Common myeloid progenitor, CD34-positive (primary cell): ENCODE measurements at regions of chr11 and their contacts with region 1.

Region 1: DNA sequence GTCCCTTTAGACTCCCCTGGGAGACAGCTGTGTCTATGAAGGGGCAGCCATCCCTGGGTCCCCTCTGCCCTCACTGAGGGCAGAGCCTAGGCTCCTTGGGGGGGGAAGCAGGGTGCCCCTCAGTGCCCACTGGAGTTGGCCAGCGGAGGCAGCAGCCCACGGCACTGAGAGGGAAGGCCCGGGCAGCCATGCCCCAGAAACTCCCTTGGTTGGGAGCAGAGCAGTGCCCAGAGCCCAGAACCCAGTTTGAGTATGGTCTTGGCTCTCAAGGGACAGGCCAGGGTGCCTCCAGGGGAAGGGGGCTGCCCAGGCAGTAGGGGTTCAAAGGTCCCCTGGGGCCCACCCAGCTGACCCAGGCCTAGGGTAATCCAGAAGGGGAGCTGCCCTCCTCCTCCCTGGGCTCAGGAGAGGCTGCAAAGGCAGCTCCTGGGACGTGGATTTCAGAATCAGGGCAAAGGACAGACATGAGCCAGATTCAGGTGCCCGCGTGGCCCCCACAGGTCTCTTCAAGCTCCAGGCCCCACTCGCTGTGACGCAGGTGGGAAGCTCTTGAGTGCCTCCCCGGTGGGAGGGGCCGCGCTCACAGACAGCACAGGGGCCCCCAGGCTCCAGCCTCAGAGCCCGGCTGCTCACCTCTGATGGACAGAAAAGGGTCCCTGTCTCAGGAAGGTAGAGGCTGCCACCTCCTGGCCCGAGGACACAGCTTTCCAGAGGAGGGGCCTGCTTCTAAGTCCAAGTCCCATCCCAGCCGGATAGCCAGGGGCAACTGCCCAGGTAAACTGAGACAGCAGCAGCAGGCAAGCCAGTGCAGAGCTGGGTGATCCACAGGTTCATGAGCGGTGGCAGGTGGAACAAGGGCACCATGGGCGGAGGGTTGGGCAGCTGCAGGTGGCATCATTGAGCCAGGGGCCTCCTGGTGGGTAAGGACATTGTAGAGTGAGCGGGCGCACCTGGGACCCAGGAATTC is 2.6 kb downstream of the C11orf21 start:
- DNase-seq: peak; percentile 31 to 46 (median 38)
- H3K4me3 ChIP-seq: peak overlapping the region in 5 of 7 experiments; percentile 1 to 52 (median 29)
- H3K27ac ChIP-seq: peak overlapping the region in 1 of 2 experiments; percentile 25
- H3K4me1 ChIP-seq: peaks cover 3 to 68% (median 58%) of the 10 kb centered on the region in 4 experiments
- H3K27me3 ChIP-seq: no peaks in the 10 kb centered on the region

Region 2: GRCh38 chr11:2186669-2187279 is 112.3 kb before region 1 on chr11:
- CTCF ChIA-PET with region 1: interaction called, 31 read pairs
- POLR2A ChIA-PET with region 1: no interaction called
- DNase-seq: peak; percentile 84 to 90 (median 89)
- H3K4me3 ChIP-seq: peak overlapping the region in 1 of 7 experiments; percentile 40
- H3K27ac ChIP-seq: no peak overlapping the region
- H3K4me1 ChIP-seq: peaks cover 5 to 41% (median 24%) of the 10 kb centered on the region in 4 experiments
- H3K27me3 ChIP-seq: no peaks in the 10 kb centered on the region

Region 3: DNA sequence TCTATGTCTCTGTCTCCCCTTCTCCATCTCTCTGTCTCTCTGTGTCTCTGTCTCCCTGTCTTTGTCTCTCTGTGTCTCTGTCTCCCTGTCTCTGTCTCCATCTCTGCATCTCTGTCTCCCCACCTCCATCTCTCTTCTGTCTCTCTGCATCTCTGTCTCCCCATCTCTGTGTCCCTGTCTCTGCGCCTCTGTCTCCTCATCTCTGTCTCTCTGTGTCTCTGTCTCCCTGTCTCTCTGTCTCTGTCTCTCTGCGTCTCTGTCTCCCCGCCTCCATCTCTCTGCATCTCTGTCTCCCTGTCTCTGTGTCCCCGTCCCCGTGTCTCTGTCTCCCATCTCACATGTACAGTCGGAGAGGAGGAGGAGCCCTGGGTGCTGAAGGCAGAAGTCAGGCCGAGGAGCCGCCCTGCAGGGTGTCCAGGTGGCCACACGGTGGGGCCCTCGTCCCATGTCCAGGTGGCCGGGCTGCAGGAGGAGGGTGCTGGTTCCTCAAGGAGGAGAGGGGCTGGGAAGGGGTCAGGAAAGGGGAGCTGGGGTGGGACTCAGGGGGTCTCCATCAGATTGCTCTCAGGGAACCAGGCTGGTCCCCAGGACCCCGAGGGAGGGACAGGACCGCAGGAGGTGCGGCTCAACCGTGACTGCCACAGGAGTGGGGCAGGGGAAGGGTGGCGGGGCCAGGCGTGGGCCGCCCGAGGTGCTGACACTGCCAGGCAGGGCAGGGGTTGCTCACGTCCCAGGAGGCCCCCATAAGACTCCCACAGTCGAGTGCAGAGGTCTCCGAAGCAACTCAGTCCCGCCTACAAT is 101.9 kb before region 1 on chr11:
- CTCF ChIA-PET with region 1: interaction called, 50 read pairs
- POLR2A ChIA-PET with region 1: no interaction called
- DNase-seq: peak; percentile 62 to 76 (median 73)
- H3K4me3 ChIP-seq: no peak overlapping the region
- H3K27ac ChIP-seq: no peak overlapping the region
- H3K4me1 ChIP-seq: peaks cover 0 to 27% (median 14%) of the 10 kb centered on the region in 4 experiments
- H3K27me3 ChIP-seq: peaks cover 0 to 2% (median 0%) of the 10 kb centered on the region in 5 experiments

Region 4: GRCh38 chr11:2256923-2257716 is 42.0 kb before region 1 on chr11:
- CTCF ChIA-PET with region 1: no interaction called
- POLR2A ChIA-PET with region 1: no interaction called
- DNase-seq: no peak
- H3K4me3 ChIP-seq: no peak overlapping the region
- H3K27ac ChIP-seq: no peak overlapping the region
- H3K4me1 ChIP-seq: no peaks in the 10 kb centered on the region
- H3K27me3 ChIP-seq: peaks cover 0 to 3% (median 0%) of the 10 kb centered on the region in 5 experiments